Panc1 (cell line): ENCODE measurements at regions of chr19 and their contacts with region 1.

Region 1: DNA sequence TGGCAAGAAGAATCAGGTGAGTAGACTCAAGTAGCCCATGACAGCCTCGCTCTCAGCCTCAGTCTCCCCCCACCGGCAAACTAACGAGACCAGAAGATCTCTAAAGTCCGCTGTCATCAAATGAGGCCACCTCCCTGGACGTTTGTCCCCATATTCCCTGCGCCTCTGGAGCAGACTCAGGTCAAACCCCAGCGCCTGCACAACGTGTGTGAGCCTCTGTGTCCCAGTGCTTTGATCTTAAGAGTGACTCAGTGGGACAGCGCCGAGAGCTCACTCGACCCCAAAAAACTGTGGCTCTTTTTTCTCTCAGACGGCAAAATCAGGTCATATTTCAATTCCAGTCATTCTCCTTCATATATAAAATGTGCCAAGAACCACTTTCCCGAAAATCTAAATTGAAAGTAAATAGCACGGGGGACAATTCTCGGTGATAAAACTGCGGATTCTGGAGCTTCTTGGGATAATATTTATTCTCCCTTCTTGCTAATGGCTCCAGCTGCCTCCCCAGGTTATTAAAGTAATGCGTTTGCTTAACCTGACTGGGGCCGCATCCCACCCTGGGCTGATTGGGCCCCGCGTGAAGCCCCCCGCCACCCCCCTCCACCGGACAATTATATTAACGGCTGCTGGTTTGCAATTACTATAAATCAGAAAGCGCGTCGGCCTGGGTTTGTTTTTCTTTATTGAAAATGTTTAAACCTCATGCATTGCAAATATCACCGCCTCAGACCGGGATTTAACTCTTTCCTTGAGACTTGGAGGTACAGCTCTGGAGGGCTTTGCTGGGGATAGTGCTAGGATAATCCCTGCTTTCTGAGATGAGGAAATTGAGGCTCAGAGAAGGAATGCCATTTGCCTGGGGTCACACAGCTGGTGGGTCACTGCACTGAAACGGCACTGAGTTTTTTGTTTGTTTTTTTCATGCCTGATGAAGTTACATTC is 37.5 kb upstream of the ZNRF4 start:
- DNase-seq: no peak
- ATAC-seq: no peak
- H3K4me3 ChIP-seq: no peak overlapping the region
- H3K27ac ChIP-seq: no peak overlapping the region
- H3K4me1 ChIP-seq: no peaks in the 10 kb centered on the region
- H3K27me3 ChIP-seq: no peaks in the 10 kb centered on the region; the same call in 1 of the 2 replicates
- CTCF ChIP-seq: no peak

Region 2: GRCh38 chr19:5360414-5360813 is 57.4 kb before region 1 on chr19:
- CTCF ChIA-PET with region 1: interaction called, 10 read pairs
- POLR2A ChIA-PET with region 1: no interaction called
- in situ Hi-C with region 1: no loop called
- intact Hi-C with region 1: no loop called
- DNase-seq: no peak
- ATAC-seq: no peak
- H3K4me3 ChIP-seq: no peak overlapping the region
- H3K27ac ChIP-seq: no peak overlapping the region
- H3K4me1 ChIP-seq: no peaks in the 10 kb centered on the region
- H3K27me3 ChIP-seq: no peaks in the 10 kb centered on the region
- CTCF ChIP-seq: no peak

Region 3: DNA sequence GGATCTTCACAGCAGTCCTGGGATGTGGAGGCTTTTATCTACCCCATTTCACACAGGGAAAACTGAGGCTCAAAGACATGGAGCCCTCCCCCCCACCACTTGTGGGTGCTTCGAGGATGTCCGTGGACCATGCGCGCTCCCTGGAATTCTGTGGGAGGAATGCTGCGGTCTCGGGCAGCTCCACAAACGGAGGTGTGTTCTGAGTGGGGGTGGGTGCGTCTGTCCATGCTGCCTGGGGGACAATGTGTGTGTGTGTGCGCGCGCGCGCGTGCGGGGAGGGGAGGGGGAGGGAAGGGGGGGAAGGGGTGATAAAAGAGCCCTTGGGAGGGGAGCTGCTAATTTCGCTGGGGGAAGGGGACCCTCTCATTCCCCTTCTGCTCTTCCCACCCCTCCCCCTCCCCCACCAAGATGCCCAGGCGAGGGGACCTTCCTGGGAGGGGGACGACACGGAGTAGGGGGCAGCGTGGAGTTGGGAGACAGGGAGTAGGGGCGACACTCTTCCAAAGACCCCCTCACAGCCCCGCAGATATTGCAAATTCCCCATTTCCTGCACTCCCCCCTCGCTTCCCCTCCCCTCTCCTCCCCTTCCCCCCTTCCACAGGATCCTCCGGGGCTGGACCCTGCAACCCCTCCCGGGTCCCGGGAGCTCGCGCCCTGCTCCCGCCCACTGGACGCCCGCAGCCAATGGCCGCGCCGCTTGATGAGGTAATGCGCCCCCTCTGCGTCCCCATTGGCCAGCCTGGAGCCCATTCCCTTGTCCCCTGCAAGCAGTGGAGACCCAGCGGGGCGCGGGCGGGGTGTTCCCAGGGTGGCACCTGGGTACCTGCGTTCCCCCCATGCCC is 18.6 kb after region 1 on chr19:
- CTCF ChIA-PET with region 1: no interaction called
- POLR2A ChIA-PET with region 1: no interaction called
- in situ Hi-C with region 1: no loop called
- intact Hi-C with region 1: no loop called
- DNase-seq: no peak
- ATAC-seq: peak; percentile 92
- H3K4me3 ChIP-seq: peak overlapping the region; percentile 21 to 45; a peak in 3 of 4 replicates
- H3K27ac ChIP-seq: no peak overlapping the region
- H3K4me1 ChIP-seq: peaks cover 9% of the 10 kb centered on the region; the same call in 1 of the 2 replicates
- H3K27me3 ChIP-seq: no peaks in the 10 kb centered on the region
- CTCF ChIP-seq: no peak